HepG2 (cell line): ENCODE measurements at regions of chr12 and their contacts with region 1.

Region 1: DNA sequence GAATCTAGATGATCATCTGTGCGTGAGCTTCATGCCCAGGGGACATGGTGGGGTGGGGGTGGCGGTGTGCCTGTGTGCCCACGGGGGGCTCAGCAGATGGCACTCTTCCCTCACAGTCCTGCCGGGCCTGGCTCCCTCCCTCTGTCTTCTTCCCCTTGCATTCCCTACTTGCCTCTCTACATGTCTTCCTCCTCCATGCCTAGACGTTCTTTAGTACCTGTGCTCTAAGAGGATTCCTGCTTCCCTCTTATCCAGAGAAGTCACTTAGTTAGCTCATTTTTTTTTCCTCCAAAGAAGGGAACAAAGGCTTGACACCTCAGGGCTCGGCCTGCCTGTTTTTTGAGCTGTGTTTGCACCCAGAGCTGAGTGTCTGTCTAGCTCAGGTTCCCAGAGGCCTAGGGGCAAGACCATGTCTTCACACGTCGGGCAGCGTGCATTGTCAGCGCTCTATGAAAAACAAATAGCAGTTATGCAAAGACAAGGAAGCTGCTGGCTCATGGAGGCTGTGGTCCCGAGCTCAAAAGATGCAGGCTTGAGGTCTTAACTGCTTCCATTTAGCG is 48.8 kb downstream of the NINJ2 start:
- DNase-seq: peak; percentile 31
- ATAC-seq: peak; percentile 61
- H3K4me3 ChIP-seq: no peak overlapping the region
- H3K27ac ChIP-seq: no peak overlapping the region
- H3K4me1 ChIP-seq: peaks cover 71% of the 10 kb centered on the region
- H3K27me3 ChIP-seq: no peaks in the 10 kb centered on the region
- CTCF ChIP-seq: peak; percentile 86
- EP300 ChIP-seq: no peak
- POLR2A ChIP-seq: no peak
- RAD21 ChIP-seq: peak; percentile 80

Region 2: DNA sequence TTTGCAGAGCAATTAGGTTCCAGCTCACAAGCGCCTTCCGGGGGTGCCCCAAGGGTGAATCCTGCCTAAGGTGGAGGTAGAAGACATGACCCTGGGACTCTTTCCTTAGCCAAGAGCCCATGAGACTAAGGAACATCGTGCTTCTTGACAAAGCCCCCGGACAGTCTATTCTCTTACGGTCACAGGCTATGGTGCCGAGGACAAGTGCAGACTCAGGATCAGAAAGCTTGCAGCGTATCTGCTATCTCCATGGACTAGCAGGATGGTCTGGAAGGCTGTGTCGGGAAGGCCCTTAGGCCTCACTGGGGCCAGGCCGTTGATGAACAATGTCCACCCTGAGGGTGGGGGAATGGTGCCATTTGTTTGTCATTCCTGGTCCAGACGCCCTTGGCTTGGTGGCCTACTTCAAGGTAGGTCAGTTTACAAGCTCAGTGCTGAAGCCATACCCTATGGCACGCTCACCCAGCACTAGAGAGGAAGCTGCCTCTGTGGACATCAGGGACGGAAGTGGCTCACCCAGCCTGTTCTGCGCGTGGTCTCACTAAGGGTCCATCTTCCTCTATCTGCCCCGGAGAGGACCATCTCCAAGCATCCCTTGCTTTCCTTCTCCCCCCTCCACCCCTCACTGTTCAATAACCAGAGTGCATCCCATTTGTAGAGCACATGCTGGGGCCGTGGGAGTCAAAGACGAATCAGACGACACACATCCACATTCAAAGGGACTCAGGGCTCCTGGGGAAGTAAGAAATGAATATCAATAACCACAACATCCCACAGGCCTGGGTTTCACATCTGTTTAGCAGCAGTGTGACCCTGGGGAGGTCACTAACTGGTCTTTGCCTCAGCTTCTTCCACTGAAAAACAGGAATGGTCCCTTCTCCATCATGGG is 592.9 kb before region 1 on chr12:
- CTCF ChIA-PET with region 1: no interaction called
- POLR2A ChIA-PET with region 1: no interaction called
- in situ Hi-C with region 1: no loop called
- intact Hi-C with region 1: no loop called
- DNase-seq: peak; percentile 10
- ATAC-seq: peak; percentile 26
- H3K4me3 ChIP-seq: peak overlapping the region in 1 of 3 experiments; percentile 34; a peak in 2 of 6 replicates
- H3K27ac ChIP-seq: peak overlapping the region; percentile 72
- H3K4me1 ChIP-seq: peaks cover 36% of the 10 kb centered on the region
- H3K27me3 ChIP-seq: no peaks in the 10 kb centered on the region
- CTCF ChIP-seq: no peak
- EP300 ChIP-seq: no peak
- POLR2A ChIP-seq: no peak
- RAD21 ChIP-seq: no peak

Region 3: DNA sequence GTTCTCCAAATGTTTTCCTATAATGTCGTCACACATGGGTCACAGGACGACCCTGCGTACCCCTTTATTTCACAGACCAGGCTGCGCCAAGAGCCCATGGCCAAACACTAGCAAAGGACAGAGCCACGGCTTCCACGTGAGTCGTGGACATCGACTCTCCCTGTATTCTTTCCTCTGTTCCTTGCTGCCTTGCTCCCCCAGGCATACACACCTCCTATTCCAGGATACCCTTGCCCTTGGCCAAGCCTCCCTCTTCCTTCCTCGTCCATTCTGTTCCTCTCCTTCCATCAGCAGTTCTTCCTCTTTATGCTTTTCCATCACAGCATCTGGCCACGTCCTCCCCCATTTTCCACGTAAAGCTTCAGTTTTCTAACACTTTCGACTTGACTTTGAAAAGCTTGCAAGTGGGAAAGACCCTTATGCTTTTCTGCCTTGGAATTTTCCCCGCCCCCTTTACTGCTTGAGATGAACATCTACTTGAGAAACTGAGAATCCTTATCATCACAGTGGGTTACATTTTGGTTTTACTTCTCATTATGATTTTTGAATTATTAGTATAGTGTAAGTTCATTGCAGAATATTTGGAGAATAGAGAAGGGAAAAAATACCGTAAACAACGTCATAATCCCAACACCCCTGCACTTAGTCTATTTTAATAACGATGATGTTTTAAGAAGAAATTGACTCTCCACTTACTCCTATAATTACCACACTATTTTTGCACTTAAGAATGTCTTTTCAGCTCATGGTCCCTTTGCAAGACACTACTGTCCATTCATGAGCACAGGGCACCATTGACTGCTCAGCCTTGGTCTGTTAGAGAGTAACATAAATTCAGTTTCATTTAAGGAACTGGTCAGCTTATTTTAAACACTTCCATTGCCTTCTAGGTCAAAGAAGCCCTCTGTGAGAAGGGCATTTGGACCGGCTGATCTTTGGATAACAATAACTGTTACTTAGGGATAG is 64.5 kb after region 1 on chr12:
- CTCF ChIA-PET with region 1: no interaction called
- POLR2A ChIA-PET with region 1: no interaction called
- in situ Hi-C with region 1: no loop called
- intact Hi-C with region 1: loop called (anchors 5 kb)
- DNase-seq: no peak
- ATAC-seq: no peak
- H3K4me3 ChIP-seq: no peak overlapping the region
- H3K27ac ChIP-seq: no peak overlapping the region
- H3K4me1 ChIP-seq: peaks cover 5% of the 10 kb centered on the region
- H3K27me3 ChIP-seq: 0 out of 5 replicates have a peak, but pooled peaks cover 0 to 6% of the 10 kb centered on the region in 2 experiments
- CTCF ChIP-seq: no peak
- EP300 ChIP-seq: no peak
- POLR2A ChIP-seq: no peak
- RAD21 ChIP-seq: no peak

Region 4: GRCh38 chr12:751192-751998 is 136.9 kb after region 1 on chr12:
- CTCF ChIA-PET with region 1: interaction called, 15 read pairs
- POLR2A ChIA-PET with region 1: interaction called, 8 read pairs
- in situ Hi-C with region 1: loop called (anchors 10 kb)
- intact Hi-C with region 1: loop called (anchors 1 kb)
- DNase-seq: peak; percentile 91
- ATAC-seq: peak; percentile 71
- H3K4me3 ChIP-seq: peak overlapping the region; percentile 65 to 71 (median 67)
- H3K27ac ChIP-seq: peak overlapping the region; percentile 64
- H3K4me1 ChIP-seq: peaks cover 17% of the 10 kb centered on the region
- H3K27me3 ChIP-seq: no peaks in the 10 kb centered on the region; a peak in 1 of 5 replicates
- CTCF ChIP-seq: peak; percentile 97
- EP300 ChIP-seq: peak in 1 of 2 experiments; percentile 34; a peak in 2 of 4 replicates
- POLR2A ChIP-seq: peak; percentile 61 to 68
- RAD21 ChIP-seq: peak; percentile 94

Region 5: DNA sequence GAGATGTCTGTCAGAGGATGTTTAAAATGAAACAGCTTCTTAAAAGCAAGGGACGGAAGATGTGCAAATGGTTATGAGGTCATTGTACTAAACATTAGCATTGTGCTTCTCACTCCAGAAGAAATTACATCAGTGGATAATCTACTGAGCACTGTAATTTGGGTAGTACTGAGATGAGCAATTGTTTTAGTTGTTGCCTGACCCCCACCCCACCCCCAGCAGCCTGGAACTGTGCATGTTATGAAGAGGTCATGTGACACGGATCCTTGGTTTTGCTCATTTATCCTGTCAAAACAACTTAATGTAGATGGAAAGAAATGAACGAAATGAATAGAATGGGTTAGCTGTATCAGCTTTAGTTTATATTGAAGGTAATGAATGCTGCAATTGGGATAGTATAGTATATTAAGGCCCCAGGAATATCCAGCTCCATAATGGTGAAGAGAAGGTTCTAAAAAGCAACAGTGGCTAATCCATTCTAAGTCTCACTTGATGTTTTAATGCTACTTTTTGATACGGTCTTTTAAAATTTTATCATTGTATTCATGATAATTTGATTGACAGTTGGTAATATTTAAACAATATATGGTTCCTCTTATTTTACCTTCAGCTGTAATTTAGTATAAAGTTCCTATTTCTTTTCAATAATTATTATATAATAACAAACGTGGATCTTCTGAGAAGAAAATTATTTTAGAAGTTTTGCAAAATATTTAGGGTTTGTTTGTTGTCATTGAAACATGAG is 196.4 kb after region 1 on chr12:
- CTCF ChIA-PET with region 1: no interaction called
- POLR2A ChIA-PET with region 1: interaction called, 4 read pairs
- in situ Hi-C with region 1: no loop called
- intact Hi-C with region 1: loop called (anchors 1 kb)
- DNase-seq: no peak
- ATAC-seq: no peak
- H3K4me3 ChIP-seq: no peak overlapping the region
- H3K27ac ChIP-seq: no peak overlapping the region
- H3K4me1 ChIP-seq: peaks cover 14% of the 10 kb centered on the region
- H3K27me3 ChIP-seq: no peaks in the 10 kb centered on the region
- CTCF ChIP-seq: no peak
- EP300 ChIP-seq: no peak
- POLR2A ChIP-seq: no peak
- RAD21 ChIP-seq: no peak